ENCODE measurements at regions of chr11 and their contacts with region 1.

Region 1: DNA sequence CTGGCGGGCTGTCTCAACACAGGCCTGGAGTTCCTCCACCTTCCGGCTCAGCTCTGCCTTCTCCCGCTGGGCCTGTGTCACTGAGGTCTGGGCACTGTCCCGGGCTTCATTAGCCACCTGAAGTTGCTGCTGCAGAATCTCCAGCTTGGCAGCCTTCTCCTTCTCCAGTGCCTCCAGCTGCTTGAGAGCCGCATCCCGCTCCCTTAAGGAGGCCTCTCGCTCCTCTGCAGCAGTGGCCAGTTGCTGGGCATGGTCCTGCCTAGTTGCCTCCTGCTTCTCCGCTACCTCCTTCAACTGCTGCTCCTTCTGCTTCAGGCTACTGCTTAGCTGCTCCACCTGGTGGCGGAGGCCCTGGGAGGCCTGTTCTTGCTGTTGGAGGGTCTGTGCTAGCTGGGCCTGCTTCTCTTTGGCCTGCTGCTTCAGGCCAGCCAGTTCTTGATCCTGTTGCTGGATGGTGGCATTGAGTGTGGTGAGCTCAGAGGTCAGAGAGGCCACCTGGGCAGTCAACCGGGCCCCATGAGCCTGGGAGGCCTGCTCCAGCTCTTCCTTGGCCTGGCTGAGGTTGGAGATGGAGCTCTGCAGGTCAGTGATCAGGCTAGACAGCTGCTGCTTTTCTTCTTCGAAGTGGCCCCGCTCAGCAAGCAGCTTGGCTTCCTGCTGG is 16.9 kb downstream of the IL18BP start:
- DNase-seq: peak in 1 of 2 experiments; percentile 49
- ATAC-seq: peak; percentile 48 to 64; a peak in 4 of 6 replicates
- H3K4me3 ChIP-seq: no peak overlapping the region
- H3K27ac ChIP-seq: peak overlapping the region in 1 of 2 experiments; percentile 15; a peak in 1 of 6 replicates
- H3K4me1 ChIP-seq: peaks cover 30% of the 10 kb centered on the region
- CTCF ChIP-seq: peak; percentile 42; the same call in 2 of the 3 replicates
- EP300 ChIP-seq: no peak
- POLR2A ChIP-seq: no peak
- RAD21 ChIP-seq: peak; percentile 32 to 54; a peak in 4 of 5 replicates

Region 2: DNA sequence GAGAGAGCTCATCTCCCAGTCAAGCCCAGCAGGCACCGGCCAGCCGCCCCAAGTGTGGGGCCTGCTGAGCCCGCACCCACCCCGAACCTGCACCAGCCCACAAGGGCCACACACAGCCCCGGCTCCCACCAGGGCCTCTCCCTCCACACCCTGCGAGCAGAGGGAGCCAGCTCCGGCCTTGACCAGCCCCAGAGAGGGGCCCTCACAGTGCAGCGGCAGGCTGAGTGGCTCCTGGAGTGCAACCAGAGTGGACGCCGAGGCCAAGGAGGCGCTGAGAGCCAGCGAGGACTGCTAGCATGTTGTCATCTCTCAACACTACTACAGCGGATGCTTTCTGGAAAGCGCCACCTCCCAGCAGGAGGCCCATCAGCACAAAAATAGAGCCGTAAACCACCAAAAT is 171.8 kb before region 1 on chr11:
- CTCF ChIA-PET with region 1: no interaction called
- POLR2A ChIA-PET with region 1: no interaction called
- DNase-seq: no peak
- ATAC-seq: no peak
- H3K4me3 ChIP-seq: no peak overlapping the region
- H3K27ac ChIP-seq: no peak overlapping the region
- H3K4me1 ChIP-seq: peaks cover 7% of the 10 kb centered on the region; the same call in 1 of the 3 replicates
- CTCF ChIP-seq: no peak
- EP300 ChIP-seq: no peak
- POLR2A ChIP-seq: no peak
- RAD21 ChIP-seq: no peak

Region 3: DNA sequence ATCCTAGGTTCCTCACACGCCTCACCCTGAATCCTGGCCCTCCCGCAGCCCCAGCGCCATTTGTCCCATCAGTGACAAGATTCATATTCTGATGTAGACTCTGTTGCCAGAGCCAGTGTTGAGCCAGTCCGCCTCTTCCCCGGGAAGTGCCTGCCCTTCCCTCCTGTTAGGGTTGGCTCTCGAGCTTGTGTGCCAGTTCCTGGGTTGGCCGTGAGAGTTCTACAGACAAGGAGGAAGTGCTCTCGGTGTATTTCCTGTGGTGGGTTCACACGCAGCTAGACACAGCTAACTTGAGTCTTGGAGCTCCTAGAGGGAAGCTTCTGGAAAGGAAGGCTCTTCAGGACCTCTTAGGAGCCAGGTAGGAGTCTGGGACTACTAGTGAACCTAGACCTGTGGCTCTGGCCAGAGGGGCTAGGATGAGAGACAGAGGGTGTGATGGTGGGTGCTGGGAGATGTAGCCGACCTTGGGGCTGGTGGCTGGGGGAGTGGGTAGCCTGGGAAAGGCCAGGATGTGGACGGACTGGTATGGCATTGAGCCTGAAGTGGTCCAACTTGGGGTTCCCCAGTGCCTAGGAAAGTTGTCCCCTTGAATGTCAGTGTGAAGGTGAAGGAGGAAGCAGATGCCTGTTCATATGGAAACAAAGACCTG is 16.9 kb before region 1 on chr11 and contains the start of gene IL18BP:
- CTCF ChIA-PET with region 1: interaction called, 10 read pairs
- POLR2A ChIA-PET with region 1: no interaction called
- DNase-seq: no peak
- ATAC-seq: no peak
- H3K4me3 ChIP-seq: no peak within 1 kb of the TSS
- H3K27ac ChIP-seq: peak within 1 kb of the TSS in 1 of 2 experiments; percentile 52; a peak in 2 of 6 replicates
- H3K4me1 ChIP-seq: 0 out of 3 replicates have a peak, but pooled peaks cover 11% of the 10 kb centered on the region
- CTCF ChIP-seq: no peak
- EP300 ChIP-seq: no peak
- POLR2A ChIP-seq: no peak
- RAD21 ChIP-seq: no peak
- polyA plus RNA-seq, gene IL18BP: 7.6 and 7.7 TPM in 2 replicates

Region 4: GRCh38 chr11:72004936-72005500 is 10.6 kb before region 1 on chr11:
- CTCF ChIA-PET with region 1: interaction called, 11 read pairs
- POLR2A ChIA-PET with region 1: no interaction called
- DNase-seq: no peak
- ATAC-seq: no peak
- H3K4me3 ChIP-seq: no peak overlapping the region
- H3K27ac ChIP-seq: no peak overlapping the region
- H3K4me1 ChIP-seq: no peaks in the 10 kb centered on the region
- CTCF ChIP-seq: no peak
- EP300 ChIP-seq: no peak
- POLR2A ChIP-seq: no peak
- RAD21 ChIP-seq: no peak

Region 5: DNA sequence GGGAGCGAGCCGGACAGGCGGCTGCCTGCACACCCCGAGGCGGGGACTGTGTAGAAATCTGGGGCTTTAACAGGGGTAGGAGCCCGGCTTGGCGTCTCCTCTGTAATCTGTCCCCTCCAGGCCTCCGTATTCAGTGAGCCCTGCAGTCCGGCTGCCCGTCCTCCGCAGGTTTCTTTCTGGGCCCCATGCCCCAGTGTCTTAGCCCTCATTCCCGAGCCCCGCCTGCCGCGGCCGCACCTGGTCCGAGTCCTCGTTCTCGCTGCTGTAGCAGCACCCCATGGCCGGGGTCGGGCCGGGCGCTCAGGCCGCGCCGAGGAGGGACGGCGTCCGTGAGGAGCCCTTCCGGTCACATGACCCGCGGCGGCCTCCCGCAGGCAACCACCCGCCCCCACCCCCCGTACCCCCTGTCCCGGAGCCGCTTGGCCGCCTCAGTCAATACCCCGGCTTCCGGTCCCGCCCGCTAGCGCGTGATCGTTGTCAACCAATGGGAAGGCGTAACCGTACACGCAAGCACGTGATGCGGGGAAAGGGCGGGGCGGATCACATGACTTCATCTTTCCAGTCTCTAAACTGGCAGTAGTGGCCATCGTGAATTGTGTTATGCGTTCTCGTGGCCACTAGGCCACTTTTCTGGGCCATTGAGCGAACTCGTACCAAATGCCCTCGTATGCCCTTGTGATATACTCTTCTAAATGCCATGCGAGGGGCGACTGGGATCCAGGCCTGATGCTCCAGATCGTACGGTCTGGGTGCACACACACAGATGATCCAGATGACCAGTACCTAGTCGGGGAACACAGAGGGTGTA is 87.5 kb after region 1 on chr11 and contains the start of gene LAMTOR1:
- CTCF ChIA-PET with region 1: interaction called, 354 read pairs
- POLR2A ChIA-PET with region 1: no interaction called
- DNase-seq: peak; percentile 90 to 99
- ATAC-seq: peak; percentile 87 to 96
- H3K4me3 ChIP-seq: peak within 1 kb of the TSS; percentile 94
- H3K27ac ChIP-seq: peak within 1 kb of the TSS; percentile 93 to 94
- H3K4me1 ChIP-seq: peaks cover 14% of the 10 kb centered on the region
- CTCF ChIP-seq: no peak
- EP300 ChIP-seq: 0 out of 5 replicates have a peak, but pooled peaks of 1 of the 2 experiments have one; percentile 26
- POLR2A ChIP-seq: peak; percentile 49
- RAD21 ChIP-seq: no peak
- polyA plus RNA-seq, gene LAMTOR1: 66.1 and 85.8 TPM in 2 replicates

Measured in A549 (cell line).